ENCODE measurements at regions of chr1 and their contacts with region 1.

Region 1: DNA sequence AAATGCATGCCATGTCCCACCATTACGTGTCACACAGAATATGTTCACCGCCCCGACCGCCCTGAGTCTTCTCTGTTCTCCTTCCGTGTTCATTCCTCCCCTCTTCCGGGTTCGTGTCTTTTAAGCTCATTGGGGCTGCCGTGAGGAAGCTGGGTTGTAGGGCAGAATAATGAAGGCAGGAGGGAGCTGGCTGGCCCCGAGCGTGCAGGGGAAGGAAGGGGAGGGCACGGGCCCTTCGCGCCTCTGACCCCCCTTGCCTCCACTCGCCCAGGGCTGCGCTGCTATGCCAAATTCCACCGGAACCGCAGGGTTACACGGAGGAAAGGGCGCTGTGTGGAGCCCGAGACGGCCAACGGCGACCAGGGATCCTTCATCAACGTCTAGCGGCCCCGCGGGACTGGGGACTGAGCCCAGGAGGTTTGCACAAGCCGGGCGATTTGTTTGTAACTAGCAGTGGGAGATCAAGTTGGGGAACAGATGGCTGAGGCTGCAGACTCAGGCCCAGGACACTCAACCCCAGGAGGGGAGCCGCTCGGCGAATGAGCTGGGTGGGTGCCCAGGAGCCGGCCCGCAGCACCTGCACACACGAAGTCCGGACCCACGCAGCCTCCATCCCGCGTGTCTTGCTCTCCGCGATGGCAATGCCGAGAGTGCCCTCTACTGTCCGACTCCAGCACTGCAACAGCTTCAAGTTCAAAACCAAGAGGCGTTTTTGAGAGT is 16.5 kb upstream of the AGTRAP start:
- DNase-seq: no peak
- H3K4me3 ChIP-seq: peak overlapping the region; percentile 42
- CTCF ChIP-seq: peak; percentile 90

Region 2: GRCh38 chr1:11654137-11654938 is 65.1 kb before region 1 on chr1 and contains the starts of genes FBXO2 and FBXO44:
- CTCF ChIA-PET with region 1: interaction called, 88 read pairs
- POLR2A ChIA-PET with region 1: no interaction called
- DNase-seq: no peak
- H3K4me3 ChIP-seq: peak within 1 kb of the TSS; percentile 64
- CTCF ChIP-seq: no peak

Region 3: GRCh38 chr1:11661103-11661502 is 58.4 kb before region 1 on chr1:
- CTCF ChIA-PET with region 1: interaction called, 64 read pairs
- POLR2A ChIA-PET with region 1: interaction called, 3 read pairs
- DNase-seq: no peak
- H3K4me3 ChIP-seq: no peak overlapping the region
- CTCF ChIP-seq: no peak

Region 4: GRCh38 chr1:11681071-11681771 is 38.3 kb before region 1 on chr1 and contains the start of gene MAD2L2:
- CTCF ChIA-PET with region 1: interaction called, 18 read pairs
- POLR2A ChIA-PET with region 1: no interaction called
- DNase-seq: no peak
- H3K4me3 ChIP-seq: peak within 1 kb of the TSS; percentile 89
- CTCF ChIP-seq: no peak

Region 5: GRCh38 chr1:11707621-11708276 is 11.7 kb before region 1 on chr1:
- CTCF ChIA-PET with region 1: interaction called, 95 read pairs
- POLR2A ChIA-PET with region 1: no interaction called
- DNase-seq: no peak
- H3K4me3 ChIP-seq: no peak overlapping the region
- CTCF ChIP-seq: no peak

Region 6: GRCh38 chr1:11735854-11736745 is 16.6 kb after region 1 on chr1 and contains the start of gene AGTRAP:
- CTCF ChIA-PET with region 1: interaction called, 21 read pairs
- POLR2A ChIA-PET with region 1: no interaction called
- DNase-seq: no peak
- H3K4me3 ChIP-seq: peak within 1 kb of the TSS; percentile 89
- CTCF ChIP-seq: peak; percentile 21

Region 7: GRCh38 chr1:11929849-11930248 is 210.4 kb after region 1 on chr1:
- CTCF ChIA-PET with region 1: no interaction called
- POLR2A ChIA-PET with region 1: no interaction called
- DNase-seq: no peak
- H3K4me3 ChIP-seq: no peak overlapping the region
- CTCF ChIP-seq: no peak

Measured in AG04449 (cell line).